CD4-positive, alpha-beta memory T cell (primary cell): ENCODE measurements at regions of chr4 and their contacts with region 1.

Region 1: DNA sequence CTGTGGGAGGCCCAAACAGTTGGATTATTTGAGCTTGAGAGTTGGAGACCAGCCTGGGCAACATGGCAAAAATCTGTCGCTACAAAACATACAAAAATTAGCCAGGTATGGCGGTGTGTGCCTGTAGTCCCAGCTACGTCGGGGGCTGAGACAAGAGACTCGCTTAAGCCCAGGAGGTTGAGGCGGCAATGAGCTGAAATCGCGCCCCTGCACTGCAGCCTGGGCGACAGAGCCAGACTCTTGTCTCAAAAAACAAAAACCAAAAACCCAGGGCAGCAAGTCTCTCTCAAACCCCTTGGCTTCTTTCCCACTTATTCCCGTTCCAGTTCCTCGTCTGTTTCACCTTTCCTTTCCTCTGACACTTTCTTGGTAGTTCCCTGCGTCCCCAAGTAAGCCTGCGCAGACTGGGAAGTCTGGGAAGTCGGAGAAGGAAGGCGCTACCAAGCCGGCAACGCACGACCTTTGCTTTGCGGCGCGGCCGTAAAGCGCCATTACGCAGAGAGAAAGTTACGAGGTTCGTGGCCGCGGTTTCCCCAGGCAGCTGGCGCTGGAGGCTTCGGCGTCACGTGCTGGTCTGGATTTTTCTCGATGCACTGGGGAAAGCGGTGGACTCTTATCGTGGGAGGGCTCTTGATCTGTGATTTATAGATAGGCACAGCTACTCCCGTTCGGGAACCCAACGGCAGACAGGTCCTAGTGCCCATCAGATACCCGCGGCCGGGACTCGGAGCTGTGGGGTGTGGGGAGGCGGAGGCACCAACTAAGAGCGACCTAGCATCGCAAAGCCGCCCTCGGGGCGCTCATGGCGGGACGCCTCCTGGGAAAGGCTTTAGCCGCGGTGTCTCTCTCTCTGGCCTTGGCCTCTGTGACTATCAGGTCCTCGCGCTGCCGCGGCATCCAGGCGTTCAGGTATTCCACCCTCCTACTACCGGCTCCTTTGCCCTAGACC is at the start of gene NUDT9:
- DNase-seq: peak; percentile 88 to 93 (median 91)
- H3K4me3 ChIP-seq: peak within 1 kb of the TSS; percentile 80 to 93
- H3K4me3 Mint-ChIP-seq: peak within 1 kb of the TSS; percentile 96 to 99 (median 99)
- H3K27ac ChIP-seq: peak within 1 kb of the TSS; percentile 82
- H3K27ac Mint-ChIP-seq: peak within 1 kb of the TSS; percentile 98 to 100 (median 99)
- H3K4me1 ChIP-seq: peaks cover 33% of the 10 kb centered on the region
- H3K4me1 Mint-ChIP-seq: peaks cover 14 to 50% (median 34%) of the 10 kb centered on the region in 4 donors
- H3K27me3 ChIP-seq: no peaks in the 10 kb centered on the region
- H3K27me3 Mint-ChIP-seq: no peaks in the 10 kb centered on the region
- total RNA-seq, gene NUDT9: 16.7 to 18.3 TPM

Region 2: GRCh38 chr4:87006676-87007527 is 415.5 kb before region 1 on chr4:
- CTCF ChIA-PET with region 1: no interaction called
- POLR2A ChIA-PET with region 1: interaction called, 3 read pairs
- intact Hi-C with region 1: loop called (anchors 2 kb)
- DNase-seq: peak; percentile 90 to 95 (median 91)
- H3K4me3 ChIP-seq: peak overlapping the region; percentile 82 to 86
- H3K4me3 Mint-ChIP-seq: peak overlapping the region; percentile 88 to 99 (median 94)
- H3K27ac ChIP-seq: peak overlapping the region; percentile 83
- H3K27ac Mint-ChIP-seq: peak overlapping the region; percentile 91 to 100 (median 97)
- H3K4me1 ChIP-seq: peaks cover 53% of the 10 kb centered on the region
- H3K4me1 Mint-ChIP-seq: peaks cover 47 to 58% (median 53%) of the 10 kb centered on the region in 4 donors
- H3K27me3 ChIP-seq: no peaks in the 10 kb centered on the region
- H3K27me3 Mint-ChIP-seq: no peaks in the 10 kb centered on the region

Region 3: DNA sequence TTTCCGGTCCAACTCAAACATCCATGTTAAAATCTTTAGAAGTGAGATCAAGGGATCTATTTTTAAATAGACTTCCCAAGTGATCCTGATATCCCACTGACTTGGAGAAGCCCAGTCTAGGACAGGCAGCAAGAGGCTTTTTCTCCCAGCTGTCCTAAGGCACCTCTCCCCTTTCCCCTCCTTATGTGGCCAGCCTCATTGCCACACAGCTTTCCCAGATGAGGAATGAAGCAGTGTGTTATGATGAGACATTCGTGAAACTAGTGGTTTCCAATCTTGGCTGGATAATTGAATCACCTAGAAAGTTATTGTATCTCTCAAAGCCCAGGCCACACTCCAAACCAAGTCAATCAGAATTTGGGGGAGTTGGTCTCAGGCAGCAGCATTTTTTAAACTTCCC is 82.9 kb before region 1 on chr4:
- CTCF ChIA-PET with region 1: no interaction called
- POLR2A ChIA-PET with region 1: no interaction called
- intact Hi-C with region 1: no loop called
- DNase-seq: no peak
- H3K4me3 ChIP-seq: no peak overlapping the region
- H3K4me3 Mint-ChIP-seq: no peak overlapping the region
- H3K27ac ChIP-seq: no peak overlapping the region
- H3K27ac Mint-ChIP-seq: no peak overlapping the region
- H3K4me1 ChIP-seq: no peaks in the 10 kb centered on the region
- H3K4me1 Mint-ChIP-seq: peaks cover 0 to 2% (median 0%) of the 10 kb centered on the region in 4 donors
- H3K27me3 ChIP-seq: no peaks in the 10 kb centered on the region
- H3K27me3 Mint-ChIP-seq: no peaks in the 10 kb centered on the region

Region 4: DNA sequence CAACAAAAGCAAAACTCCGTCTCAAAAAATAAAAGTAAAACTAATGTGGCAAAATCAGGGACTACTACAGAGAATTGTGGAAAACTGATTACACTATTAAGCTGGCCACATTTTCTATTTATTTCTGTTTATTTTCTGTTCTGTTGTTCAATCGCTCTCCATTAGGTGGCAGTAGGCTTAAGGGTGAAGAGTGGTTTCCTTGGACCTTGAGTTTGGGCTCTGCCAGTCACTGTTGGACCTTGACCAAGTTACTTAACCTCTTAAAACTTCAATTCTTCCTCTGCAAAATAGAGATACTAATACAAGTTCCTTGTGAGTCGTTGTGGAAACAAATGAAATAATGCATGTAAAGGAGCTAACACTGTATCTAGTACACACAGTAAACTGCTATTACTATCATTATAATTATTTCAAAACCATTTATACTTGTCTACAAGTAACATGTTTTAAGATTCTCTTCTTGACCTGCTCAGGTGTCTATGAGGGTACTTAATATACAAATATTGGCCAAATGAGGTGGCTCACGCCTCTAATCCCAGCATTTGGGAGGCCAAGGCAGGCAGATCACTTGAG is 46.6 kb before region 1 on chr4:
- CTCF ChIA-PET with region 1: interaction called, 42 read pairs
- POLR2A ChIA-PET with region 1: interaction called, 4 read pairs
- intact Hi-C with region 1: loop called (anchors 10 kb)
- DNase-seq: peak in 3 of 5 donors; percentile 25 to 29 (median 28)
- H3K4me3 ChIP-seq: no peak overlapping the region
- H3K4me3 Mint-ChIP-seq: no peak overlapping the region
- H3K27ac ChIP-seq: no peak overlapping the region
- H3K27ac Mint-ChIP-seq: no peak overlapping the region
- H3K4me1 ChIP-seq: no peaks in the 10 kb centered on the region
- H3K4me1 Mint-ChIP-seq: peaks cover 3 to 5% (median 4%) of the 10 kb centered on the region in 4 donors
- H3K27me3 ChIP-seq: no peaks in the 10 kb centered on the region
- H3K27me3 Mint-ChIP-seq: no peaks in the 10 kb centered on the region

Region 5: DNA sequence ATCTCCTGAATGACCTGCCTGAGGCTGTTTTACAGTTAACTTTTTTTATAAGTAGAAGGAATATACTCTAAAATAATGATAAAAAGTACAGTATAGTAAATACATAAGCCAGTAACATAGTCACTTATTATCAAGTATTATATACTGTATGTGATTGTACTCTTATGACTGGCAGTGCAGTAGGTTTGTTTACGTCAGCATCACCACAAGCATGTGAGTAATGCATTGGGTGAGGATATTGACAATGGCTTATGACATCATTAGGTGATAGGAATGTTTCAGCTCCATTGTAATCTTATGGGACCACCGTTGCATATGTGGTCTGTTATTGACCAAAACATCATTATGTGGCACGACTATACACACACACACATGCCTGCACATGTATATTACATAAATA is 20.5 kb after region 1 on chr4:
- CTCF ChIA-PET with region 1: interaction called, 3 read pairs
- POLR2A ChIA-PET with region 1: interaction called, 3 read pairs
- intact Hi-C with region 1: loop called (anchors 2 kb)
- DNase-seq: no peak
- H3K4me3 ChIP-seq: no peak overlapping the region
- H3K4me3 Mint-ChIP-seq: no peak overlapping the region
- H3K27ac ChIP-seq: no peak overlapping the region
- H3K27ac Mint-ChIP-seq: no peak overlapping the region
- H3K4me1 ChIP-seq: no peaks in the 10 kb centered on the region
- H3K4me1 Mint-ChIP-seq: peaks cover 0 to 2% (median under 1%) of the 10 kb centered on the region in 4 donors
- H3K27me3 ChIP-seq: no peaks in the 10 kb centered on the region
- H3K27me3 Mint-ChIP-seq: no peaks in the 10 kb centered on the region

Region 6: GRCh38 chr4:87476934-87477333 is 54.6 kb after region 1 on chr4:
- CTCF ChIA-PET with region 1: no interaction called
- POLR2A ChIA-PET with region 1: no interaction called
- intact Hi-C with region 1: no loop called
- DNase-seq: no peak
- H3K4me3 ChIP-seq: no peak overlapping the region
- H3K4me3 Mint-ChIP-seq: no peak overlapping the region
- H3K27ac ChIP-seq: no peak overlapping the region
- H3K27ac Mint-ChIP-seq: no peak overlapping the region
- H3K4me1 ChIP-seq: no peaks in the 10 kb centered on the region
- H3K4me1 Mint-ChIP-seq: no peaks in the 10 kb centered on the region
- H3K27me3 ChIP-seq: no peaks in the 10 kb centered on the region
- H3K27me3 Mint-ChIP-seq: no peaks in the 10 kb centered on the region

Region 7: DNA sequence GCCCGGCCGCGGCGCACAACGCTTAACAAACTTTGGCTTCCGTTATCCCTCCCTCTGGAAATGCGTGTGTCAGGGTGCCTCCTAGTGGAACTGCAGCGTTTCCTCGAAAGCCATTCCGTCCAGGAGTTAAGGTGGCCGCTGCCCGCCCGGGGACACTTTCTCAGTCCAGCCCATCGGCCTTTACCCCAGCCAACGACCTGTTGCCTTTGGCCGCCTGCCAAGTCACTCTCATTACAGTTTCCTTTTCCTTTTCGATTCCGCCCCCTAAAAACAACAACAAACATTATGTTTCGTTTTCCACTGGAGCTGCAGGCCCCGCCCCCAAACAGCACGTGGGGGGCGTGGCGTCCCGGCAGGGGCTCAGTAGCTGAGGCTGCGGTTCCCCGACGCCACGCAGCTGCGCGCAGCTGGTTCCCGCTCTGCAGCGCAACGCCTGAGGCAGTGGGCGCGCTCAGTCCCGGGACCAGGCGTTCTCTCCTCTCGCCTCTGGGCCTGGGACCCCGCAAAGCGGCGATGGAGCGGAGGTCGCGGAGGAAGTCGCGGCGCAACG is 1034.5 kb after region 1 on chr4 and contains the start of gene HERC5:
- CTCF ChIA-PET with region 1: no interaction called
- POLR2A ChIA-PET with region 1: interaction called, 8 read pairs
- intact Hi-C with region 1: loop called (anchors 10 kb)
- DNase-seq: peak; percentile 92 to 96 (median 95)
- H3K4me3 ChIP-seq: peak within 1 kb of the TSS; percentile 76 to 96
- H3K4me3 Mint-ChIP-seq: peak within 1 kb of the TSS; percentile 96 to 100 (median 100)
- H3K27ac ChIP-seq: peak within 1 kb of the TSS; percentile 71
- H3K27ac Mint-ChIP-seq: peak within 1 kb of the TSS; percentile 89 to 100 (median 100)
- H3K4me1 ChIP-seq: peaks cover 28% of the 10 kb centered on the region
- H3K4me1 Mint-ChIP-seq: peaks cover 21 to 37% (median 28%) of the 10 kb centered on the region in 4 donors
- H3K27me3 ChIP-seq: no peaks in the 10 kb centered on the region
- H3K27me3 Mint-ChIP-seq: no peaks in the 10 kb centered on the region
- total RNA-seq, gene HERC5: 18.6 to 22.1 TPM